CD4-positive, alpha-beta memory T cell (primary cell): ENCODE measurements at regions of chr15 and their contacts with region 1.

Region 1: DNA sequence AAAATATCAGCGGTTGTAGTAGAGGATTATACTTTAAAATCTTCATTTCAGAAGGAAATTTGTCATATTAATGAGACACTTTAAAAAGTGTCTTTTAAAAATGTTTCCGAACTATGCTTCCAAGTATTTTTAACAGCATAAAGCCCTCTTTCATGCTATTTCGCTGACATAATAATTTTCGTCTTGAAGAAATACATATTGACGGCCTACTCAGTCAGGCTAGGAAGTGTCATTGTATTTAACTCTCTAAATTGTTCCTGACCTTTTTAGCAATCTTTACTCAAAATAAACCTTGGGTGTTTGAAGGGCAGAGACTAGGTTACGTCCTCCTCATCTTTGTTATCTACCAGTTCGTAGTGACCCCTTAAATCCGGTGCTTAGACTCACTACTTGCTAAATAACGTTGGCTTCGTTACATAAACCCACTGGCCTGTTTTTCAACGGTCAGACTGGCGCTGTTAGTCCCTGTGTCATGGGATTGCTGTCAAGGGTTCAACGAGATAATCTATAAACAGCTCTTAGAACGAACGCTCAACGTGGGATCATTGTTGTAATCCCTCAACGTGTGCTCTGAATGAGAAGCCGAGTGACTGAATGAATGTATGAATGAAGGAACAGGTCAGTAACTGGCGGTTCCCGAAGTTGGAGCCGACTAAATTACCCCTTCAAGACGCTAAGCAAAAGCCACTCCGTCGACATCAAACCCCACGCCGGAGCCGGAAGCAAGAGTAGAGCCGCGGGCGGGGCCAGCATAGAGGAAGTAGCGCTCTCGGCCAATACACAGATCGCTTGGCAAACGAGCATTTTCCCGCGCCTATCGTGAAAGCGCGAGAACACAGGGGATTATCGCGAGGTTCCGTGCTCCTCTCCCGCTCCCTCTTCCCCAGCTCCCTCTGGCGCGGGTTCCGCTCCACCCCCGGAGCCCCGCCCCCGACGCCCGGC is 516 bp upstream of the LRRC28 start:
- DNase-seq: peak; percentile 90 to 95 (median 93)
- H3K4me3 ChIP-seq: peak overlapping the region; percentile 47 to 73
- H3K4me3 Mint-ChIP-seq: peak overlapping the region; percentile 84 to 96 (median 92)
- H3K27ac ChIP-seq: peak overlapping the region; percentile 60
- H3K27ac Mint-ChIP-seq: peak overlapping the region; percentile 70 to 95 (median 90)
- H3K4me1 ChIP-seq: peaks cover 31% of the 10 kb centered on the region
- H3K4me1 Mint-ChIP-seq: peaks cover 17 to 33% (median 29%) of the 10 kb centered on the region in 4 donors
- H3K27me3 ChIP-seq: no peaks in the 10 kb centered on the region
- H3K27me3 Mint-ChIP-seq: no peaks in the 10 kb centered on the region

Region 2: DNA sequence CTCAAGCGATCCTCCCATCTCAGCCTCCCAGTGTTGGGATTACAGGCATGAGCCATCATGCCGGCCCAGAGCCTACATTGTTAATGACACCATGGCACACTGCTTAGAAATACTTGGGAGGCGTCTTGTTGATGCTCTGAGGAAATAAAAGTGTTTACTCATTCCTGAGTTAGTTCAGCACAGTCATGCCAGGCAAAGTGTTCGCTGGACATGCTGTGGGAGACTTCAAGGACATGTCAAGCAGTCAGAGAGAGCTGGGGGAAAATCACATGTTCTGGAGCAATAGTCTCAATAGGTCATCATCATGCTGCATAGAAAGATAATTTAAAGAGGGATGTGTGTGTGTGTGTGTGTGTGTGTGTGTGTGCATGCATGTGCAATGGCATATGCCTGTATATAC is 38.8 kb before region 1 on chr15:
- CTCF ChIA-PET with region 1: no interaction called
- POLR2A ChIA-PET with region 1: no interaction called
- intact Hi-C with region 1: no loop called
- DNase-seq: no peak
- H3K4me3 ChIP-seq: no peak overlapping the region
- H3K4me3 Mint-ChIP-seq: no peak overlapping the region
- H3K27ac ChIP-seq: no peak overlapping the region
- H3K27ac Mint-ChIP-seq: no peak overlapping the region
- H3K4me1 ChIP-seq: no peaks in the 10 kb centered on the region
- H3K4me1 Mint-ChIP-seq: no peaks in the 10 kb centered on the region
- H3K27me3 ChIP-seq: no peaks in the 10 kb centered on the region
- H3K27me3 Mint-ChIP-seq: peaks cover 4% of the 10 kb centered on the region in 2 donors

Region 3: DNA sequence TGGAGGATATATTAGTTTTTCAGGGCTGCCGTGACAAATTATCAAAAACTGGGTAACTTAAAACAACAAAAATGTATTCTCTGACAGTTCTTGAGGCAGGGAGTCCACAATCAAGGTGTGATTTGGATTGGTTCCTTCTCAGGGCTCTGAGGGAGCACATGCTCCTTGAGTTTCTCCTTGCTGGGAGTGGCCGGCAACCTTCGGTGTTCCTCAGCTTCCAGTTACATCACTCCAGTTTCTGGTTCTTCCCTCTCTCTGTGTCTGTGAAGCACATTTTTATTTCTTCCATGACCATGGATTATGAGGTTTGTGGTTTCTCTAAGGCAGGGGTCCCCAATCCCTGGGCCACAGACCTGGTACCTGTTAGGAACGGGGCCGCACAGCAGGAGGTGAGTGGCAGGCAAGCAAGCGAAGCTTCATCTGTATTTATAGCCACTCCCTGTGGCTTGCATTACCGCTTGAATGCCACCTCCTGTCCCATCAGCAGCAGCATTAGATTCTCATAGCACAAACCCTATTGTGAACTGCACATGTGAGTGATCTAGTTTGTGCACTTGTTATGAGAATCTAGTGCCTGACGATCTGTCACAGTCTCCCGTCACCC is 24.9 kb after region 1 on chr15:
- CTCF ChIA-PET with region 1: interaction called, 17 read pairs
- POLR2A ChIA-PET with region 1: interaction called, 3 read pairs
- intact Hi-C with region 1: no loop called
- DNase-seq: no peak
- H3K4me3 ChIP-seq: no peak overlapping the region
- H3K4me3 Mint-ChIP-seq: no peak overlapping the region
- H3K27ac ChIP-seq: no peak overlapping the region
- H3K27ac Mint-ChIP-seq: no peak overlapping the region
- H3K4me1 ChIP-seq: no peaks in the 10 kb centered on the region
- H3K4me1 Mint-ChIP-seq: peaks cover 7 to 14% (median 13%) of the 10 kb centered on the region in 4 donors
- H3K27me3 ChIP-seq: no peaks in the 10 kb centered on the region
- H3K27me3 Mint-ChIP-seq: no peaks in the 10 kb centered on the region

Region 4: DNA sequence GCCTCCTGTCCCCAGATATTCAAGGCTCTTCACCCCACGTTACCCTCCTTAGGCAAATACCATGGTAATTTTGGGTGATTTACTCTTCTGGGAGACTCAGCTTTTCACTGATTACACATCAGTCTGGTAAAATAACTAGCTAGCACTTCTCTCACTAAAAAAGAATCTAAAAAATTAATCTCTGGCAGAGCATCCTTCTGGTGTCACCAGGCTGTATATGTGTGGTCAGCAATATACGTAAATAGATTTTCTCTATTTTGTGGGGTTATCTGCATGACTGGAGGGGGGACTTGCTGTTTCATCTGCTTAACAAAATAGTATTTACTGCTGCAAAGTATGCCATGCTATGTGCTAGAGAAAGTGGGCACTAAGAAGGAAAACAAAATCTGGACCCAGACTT is 45.6 kb after region 1 on chr15:
- CTCF ChIA-PET with region 1: no interaction called
- POLR2A ChIA-PET with region 1: no interaction called
- intact Hi-C with region 1: no loop called
- DNase-seq: no peak
- H3K4me3 ChIP-seq: no peak overlapping the region
- H3K4me3 Mint-ChIP-seq: no peak overlapping the region
- H3K27ac ChIP-seq: no peak overlapping the region
- H3K27ac Mint-ChIP-seq: no peak overlapping the region
- H3K4me1 ChIP-seq: no peaks in the 10 kb centered on the region
- H3K4me1 Mint-ChIP-seq: peaks cover 0 to 2% (median under 1%) of the 10 kb centered on the region in 4 donors
- H3K27me3 ChIP-seq: no peaks in the 10 kb centered on the region
- H3K27me3 Mint-ChIP-seq: no peaks in the 10 kb centered on the region

Region 5: DNA sequence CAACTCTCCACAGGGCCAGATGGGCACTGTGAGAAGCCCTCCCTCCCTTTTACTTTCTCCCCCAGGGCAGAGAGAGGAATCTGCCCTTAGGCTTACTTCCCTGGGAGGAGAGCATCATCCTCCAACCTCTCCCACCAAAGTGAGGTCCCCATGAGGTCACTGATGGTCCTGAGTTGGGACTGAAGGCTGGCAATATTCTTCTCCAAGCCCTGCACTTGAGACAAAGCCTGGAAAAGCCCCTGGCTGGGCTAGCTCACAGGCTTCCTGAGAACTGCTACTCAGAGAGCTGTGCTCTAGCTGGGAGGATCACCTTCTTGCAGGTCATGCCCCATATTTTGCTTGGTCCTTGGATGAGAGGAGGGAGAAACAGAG is 205.0 kb after region 1 on chr15:
- CTCF ChIA-PET with region 1: no interaction called
- POLR2A ChIA-PET with region 1: no interaction called
- intact Hi-C with region 1: no loop called
- DNase-seq: no peak
- H3K4me3 ChIP-seq: no peak overlapping the region
- H3K4me3 Mint-ChIP-seq: no peak overlapping the region
- H3K27ac ChIP-seq: no peak overlapping the region
- H3K27ac Mint-ChIP-seq: no peak overlapping the region
- H3K4me1 ChIP-seq: peaks cover 8% of the 10 kb centered on the region
- H3K4me1 Mint-ChIP-seq: peaks cover 8 to 12% (median 10%) of the 10 kb centered on the region in 4 donors
- H3K27me3 ChIP-seq: no peaks in the 10 kb centered on the region
- H3K27me3 Mint-ChIP-seq: peaks cover 2 to 3% of the 10 kb centered on the region in 2 donors

Region 6: GRCh38 chr15:99733268-99734039 is 482.7 kb after region 1 on chr15 and contains the start of gene LYSMD4:
- CTCF ChIA-PET with region 1: interaction called, 4 read pairs
- POLR2A ChIA-PET with region 1: interaction called, 11 read pairs
- intact Hi-C with region 1: loop called (anchors 1 kb)
- DNase-seq: peak; percentile 95 to 97 (median 96)
- H3K4me3 ChIP-seq: peak within 1 kb of the TSS; percentile 6 to 67
- H3K4me3 Mint-ChIP-seq: peak within 1 kb of the TSS; percentile 83 to 95 (median 87)
- H3K27ac ChIP-seq: peak within 1 kb of the TSS; percentile 46
- H3K27ac Mint-ChIP-seq: peak within 1 kb of the TSS; percentile 80 to 97 (median 88)
- H3K4me1 ChIP-seq: peaks cover 14% of the 10 kb centered on the region
- H3K4me1 Mint-ChIP-seq: peaks cover 12 to 24% (median 16%) of the 10 kb centered on the region in 4 donors
- H3K27me3 ChIP-seq: no peaks in the 10 kb centered on the region
- H3K27me3 Mint-ChIP-seq: no peaks in the 10 kb centered on the region
- total RNA-seq, gene LYSMD4: 18.0 to 19.0 TPM

Region 7: DNA sequence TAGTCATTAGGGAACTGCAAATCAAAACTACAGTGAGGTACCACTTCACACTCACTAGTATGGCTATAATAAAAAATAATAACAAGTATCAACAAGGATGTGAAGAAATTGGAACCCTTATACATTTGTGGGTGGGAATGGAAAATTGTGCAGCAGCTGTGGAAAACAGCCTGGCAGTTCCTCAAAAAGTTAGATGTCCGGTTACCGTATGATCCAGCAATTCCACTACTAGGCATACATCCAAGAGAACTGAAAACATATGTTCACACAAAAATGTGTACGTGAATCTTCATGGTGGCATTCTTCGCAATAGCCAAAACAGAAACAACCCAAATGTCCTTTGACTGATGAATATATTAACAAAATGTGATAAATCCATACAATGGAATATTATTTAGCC is 670.3 kb after region 1 on chr15:
- CTCF ChIA-PET with region 1: no interaction called
- POLR2A ChIA-PET with region 1: interaction called, 7 read pairs
- intact Hi-C with region 1: loop called (anchors 5 kb)
- DNase-seq: no peak
- H3K4me3 ChIP-seq: no peak overlapping the region
- H3K4me3 Mint-ChIP-seq: no peak overlapping the region
- H3K27ac ChIP-seq: no peak overlapping the region
- H3K27ac Mint-ChIP-seq: no peak overlapping the region
- H3K4me1 ChIP-seq: peaks cover 8% of the 10 kb centered on the region
- H3K4me1 Mint-ChIP-seq: peaks cover 5 to 9% (median 7%) of the 10 kb centered on the region in 4 donors
- H3K27me3 ChIP-seq: peaks cover 16% of the 10 kb centered on the region
- H3K27me3 Mint-ChIP-seq: peaks cover 22 to 36% of the 10 kb centered on the region in 2 donors